Gastrocnemius medialis (tissue), 4 donors: ENCODE measurements at regions of chr10 and their contacts with region 1.

Region 1: DNA sequence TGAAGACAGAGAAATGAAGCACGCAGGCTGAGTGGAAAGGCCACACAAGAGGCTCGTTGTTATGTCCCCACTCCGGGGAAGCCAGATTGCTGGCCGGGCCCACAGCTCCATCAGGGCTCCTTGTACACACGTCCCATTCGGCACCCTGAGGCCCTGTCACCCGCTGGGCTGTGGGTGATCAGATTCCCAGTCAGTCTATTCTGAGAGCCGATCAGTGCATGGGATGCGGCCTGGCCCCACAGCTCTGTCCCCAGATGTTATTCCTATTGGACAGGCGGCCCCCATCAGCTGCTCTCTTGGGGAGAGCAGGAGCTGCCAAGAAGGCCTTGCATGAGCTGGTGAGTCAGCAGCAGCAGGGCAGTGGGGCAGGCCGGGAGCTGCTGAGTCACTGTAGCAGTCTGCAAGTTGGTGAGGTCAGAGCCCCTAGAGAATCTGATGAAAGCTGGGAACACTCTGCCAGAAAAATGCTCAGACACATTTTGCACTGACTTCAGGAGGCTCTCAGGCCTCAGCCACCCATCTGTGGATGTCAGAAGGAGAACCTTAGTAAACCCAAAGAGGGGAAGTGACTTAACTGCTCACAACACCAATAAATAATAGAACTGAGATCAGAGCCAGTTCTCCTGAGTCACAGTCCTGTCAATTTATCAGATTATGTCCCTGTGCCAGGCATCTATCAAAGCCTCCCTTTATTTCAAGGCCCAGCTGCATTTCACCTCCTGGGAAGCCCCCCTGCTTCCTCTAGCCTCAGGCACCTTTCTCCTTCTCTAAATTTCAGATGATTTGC is 9.4 kb upstream of the PSAP start:
- DNase-seq: peak; percentile 99 to 100
- ATAC-seq: peak; percentile 91 to 93
- H3K4me3 ChIP-seq: peak overlapping the region in 2 of 4 donors; percentile 13 to 30
- H3K27ac ChIP-seq: peak overlapping the region; percentile 89 to 99 (median 97)
- H3K4me1 ChIP-seq: peaks cover 23 to 24% of the 10 kb centered on the region in 2 donors
- H3K27me3 ChIP-seq: no peaks in the 10 kb centered on the region
- CTCF ChIP-seq: no peak
- POLR2A ChIP-seq: peak; percentile 71 to 80

Region 2: GRCh38 chr10:70132098-70133029 is 1728.1 kb before region 1 on chr10 and contains the start of gene AIFM2:
- in situ Hi-C with region 1: no loop called
- intact Hi-C with region 1: loop called (anchors 10 kb)
- DNase-seq: peak; percentile 61 to 84
- ATAC-seq: peak; percentile 62 to 70
- H3K4me3 ChIP-seq: peak within 1 kb of the TSS; percentile 68 to 86 (median 72)
- H3K27ac ChIP-seq: peak within 1 kb of the TSS; percentile 83 to 87 (median 86)
- H3K4me1 ChIP-seq: peaks cover 34 to 40% of the 10 kb centered on the region in 2 donors
- H3K27me3 ChIP-seq: no peaks in the 10 kb centered on the region
- CTCF ChIP-seq: peak in 2 of 5 experiments; percentile 18 to 32
- POLR2A ChIP-seq: peak; percentile 45 to 49
- total RNA-seq, gene AIFM2: 6.8 to 11.0 (median 9.8) TPM

Region 3: GRCh38 chr10:71795248-71795647 is 65.2 kb before region 1 on chr10:
- in situ Hi-C with region 1: no loop called
- intact Hi-C with region 1: no loop called
- DNase-seq: no peak
- ATAC-seq: no peak
- H3K4me3 ChIP-seq: no peak overlapping the region
- H3K27ac ChIP-seq: no peak overlapping the region
- H3K4me1 ChIP-seq: no peaks in the 10 kb centered on the region
- H3K27me3 ChIP-seq: no peaks in the 10 kb centered on the region
- CTCF ChIP-seq: no peak
- POLR2A ChIP-seq: no peak

Region 4: DNA sequence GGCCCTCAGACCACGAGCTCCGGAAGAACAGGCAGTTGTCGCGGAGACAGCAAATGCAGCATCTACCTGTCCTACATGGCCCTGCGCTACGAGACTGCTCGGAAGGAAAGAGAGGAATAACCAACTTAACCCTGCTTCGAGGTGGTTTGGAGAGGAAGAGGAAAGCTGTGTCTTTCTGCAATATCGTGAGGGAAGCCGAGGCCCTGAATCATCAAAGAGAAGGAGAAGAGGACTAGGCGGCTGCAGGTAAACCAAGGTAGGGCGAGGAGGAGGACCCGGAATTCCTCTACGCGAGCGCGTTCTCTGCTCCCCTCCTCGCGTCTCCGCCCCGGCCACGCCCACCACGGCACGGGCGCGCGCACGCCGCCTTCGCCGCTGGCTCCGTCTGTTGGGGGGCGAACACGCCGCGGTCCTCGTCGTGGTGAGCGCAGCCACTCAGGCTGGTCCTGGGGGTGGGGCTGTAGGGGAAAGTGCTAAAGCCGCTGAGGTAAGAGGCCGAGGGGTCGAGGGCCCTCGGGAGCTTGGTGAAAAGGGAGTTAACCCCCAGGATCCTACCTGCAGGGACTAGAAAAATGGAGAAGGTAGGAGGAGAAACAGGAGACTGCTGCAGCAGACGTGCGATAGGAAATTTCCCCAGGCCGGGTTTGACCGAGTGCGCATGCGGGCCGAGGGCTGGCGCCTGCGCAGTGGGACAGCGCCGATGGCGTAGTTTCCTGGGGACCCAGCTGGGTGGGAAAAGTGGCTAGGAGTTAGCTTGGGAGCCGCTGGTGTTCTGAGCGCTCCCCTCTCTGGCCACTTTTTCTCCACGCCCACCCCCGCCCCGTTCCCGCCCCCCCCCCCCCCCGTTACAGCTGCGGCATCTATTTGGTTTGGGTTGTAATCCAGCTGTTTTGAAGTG is 355.5 kb after region 1 on chr10 and contains the starts of genes ANAPC16 and ASCC1:
- in situ Hi-C with region 1: no loop called
- intact Hi-C with region 1: loop called (anchors 10 kb)
- DNase-seq: peak; percentile 83 to 89
- ATAC-seq: peak; percentile 92 to 94
- H3K4me3 ChIP-seq: peak within 1 kb of the TSS; percentile 72 to 91 (median 81)
- H3K27ac ChIP-seq: peak within 1 kb of the TSS; percentile 94 to 99 (median 98)
- H3K4me1 ChIP-seq: peaks cover 55 to 56% of the 10 kb centered on the region in 2 donors
- H3K27me3 ChIP-seq: no peaks in the 10 kb centered on the region
- CTCF ChIP-seq: no peak
- POLR2A ChIP-seq: peak; percentile 91 to 96
- total RNA-seq, gene ANAPC16: 70.9 to 168 (median 105) TPM
- total RNA-seq, gene ASCC1: 26.1 to 31.1 (median 29.6) TPM